B cell (primary cell): ENCODE measurements at regions of chr7 and their contacts with region 1.

Region 1: DNA sequence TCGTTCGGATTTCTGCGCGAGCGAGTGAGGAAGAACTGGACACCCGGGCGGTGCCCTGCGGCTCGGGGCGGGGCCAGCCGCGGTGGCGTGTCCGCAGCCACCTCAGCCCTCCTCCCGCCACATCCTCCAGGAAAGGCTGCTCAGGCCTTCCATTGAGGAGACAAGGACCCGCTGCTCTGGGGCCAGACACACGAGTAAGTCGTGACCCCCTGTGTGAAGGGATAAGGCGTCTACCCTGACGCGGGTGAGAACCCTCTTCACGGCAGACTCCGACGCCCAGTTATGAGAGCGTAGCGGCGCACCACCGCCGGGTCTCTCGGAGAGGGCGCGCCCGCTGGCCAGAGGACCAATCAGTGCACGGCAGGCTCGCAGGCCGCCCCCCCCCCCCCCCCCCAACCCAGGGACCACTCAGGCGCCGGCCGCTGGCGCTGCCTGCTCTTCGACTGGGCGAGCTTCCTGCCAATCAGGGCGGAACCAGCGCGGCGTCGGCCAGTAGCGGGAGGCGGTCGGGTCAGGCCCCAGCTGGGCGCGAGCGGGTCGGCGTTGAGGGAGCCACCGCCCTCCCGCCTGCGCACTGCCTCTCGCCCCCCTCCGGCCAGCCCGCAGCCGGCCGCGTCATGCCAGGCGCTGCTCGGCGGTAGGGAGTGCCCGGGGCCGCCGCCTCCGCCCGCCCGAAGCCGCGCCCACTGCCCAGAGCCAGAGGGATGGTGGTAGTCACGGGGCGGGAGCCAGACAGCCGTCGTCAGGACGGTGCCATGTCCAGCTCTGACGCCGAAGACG is at the start of gene KCTD7:
- DNase-seq: peak; percentile 97
- ATAC-seq: peak; percentile 85
- H3K4me3 ChIP-seq: peak within 1 kb of the TSS; percentile 82 to 97 (median 88)
- H3K4me3 Mint-ChIP-seq: peak within 1 kb of the TSS; percentile 96
- H3K27ac ChIP-seq: peak within 1 kb of the TSS; percentile 89 to 91
- H3K27ac Mint-ChIP-seq: peak within 1 kb of the TSS; percentile 95
- H3K4me1 ChIP-seq: peaks cover 42 to 48% of the 10 kb centered on the region in 2 donors
- H3K4me1 Mint-ChIP-seq: peaks cover 50% of the 10 kb centered on the region
- H3K27me3 ChIP-seq: no peaks in the 10 kb centered on the region
- H3K27me3 Mint-ChIP-seq: no peaks in the 10 kb centered on the region
- CTCF ChIP-seq: no peak
- total RNA-seq, gene KCTD7: 40.2 and 44.4 TPM in 2 replicates

Region 2: GRCh38 chr7:66557608-66558143 is 70.9 kb before region 1 on chr7:
- CTCF ChIA-PET with region 1: interaction called, 5 read pairs
- POLR2A ChIA-PET with region 1: interaction called, 3 read pairs
- intact Hi-C with region 1: loop called (anchors 1 kb)
- DNase-seq: peak; percentile 76
- ATAC-seq: peak; percentile 92
- H3K4me3 ChIP-seq: no peak overlapping the region
- H3K4me3 Mint-ChIP-seq: no peak overlapping the region
- H3K27ac ChIP-seq: no peak overlapping the region
- H3K27ac Mint-ChIP-seq: peak overlapping the region; percentile 37
- H3K4me1 ChIP-seq: peaks cover 0 to 6% of the 10 kb centered on the region in 2 donors
- H3K4me1 Mint-ChIP-seq: peaks cover 4% of the 10 kb centered on the region
- H3K27me3 ChIP-seq: no peaks in the 10 kb centered on the region
- H3K27me3 Mint-ChIP-seq: no peaks in the 10 kb centered on the region
- CTCF ChIP-seq: peak; percentile 92

Region 3: DNA sequence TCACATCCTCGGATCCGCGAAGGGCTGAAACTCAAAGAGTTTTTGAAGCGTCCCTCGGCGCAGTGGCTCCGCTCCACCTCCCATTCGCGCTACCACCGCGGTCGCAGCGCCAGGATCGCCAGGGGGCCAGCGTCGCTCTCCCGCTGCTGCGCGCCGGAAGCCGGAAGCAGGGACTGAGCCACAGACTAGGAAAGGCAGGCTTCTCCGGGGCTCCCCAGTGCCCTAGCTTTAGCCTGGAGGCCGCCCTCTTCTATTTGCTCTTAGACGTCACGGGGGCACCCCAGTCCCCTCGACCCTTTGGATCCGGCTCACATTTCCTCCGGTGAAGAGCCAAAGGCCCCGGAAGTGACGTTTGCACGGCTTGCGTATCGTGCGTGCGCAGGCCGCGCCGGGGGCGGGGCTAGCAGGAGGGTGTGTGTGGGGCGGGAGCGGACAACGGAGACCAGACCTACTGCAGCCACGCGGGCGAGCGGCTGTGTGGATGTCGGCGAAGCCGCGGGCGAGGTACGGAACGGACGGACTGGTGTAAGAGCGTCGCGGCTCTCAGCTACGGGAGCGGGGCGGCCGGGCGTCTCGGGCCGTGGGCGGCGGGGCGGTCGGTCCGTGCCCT is 25.7 kb after region 1 on chr7:
- CTCF ChIA-PET with region 1: no interaction called
- POLR2A ChIA-PET with region 1: interaction called, 4 read pairs
- intact Hi-C with region 1: loop called (anchors 1 kb)
- DNase-seq: peak; percentile 99
- ATAC-seq: peak; percentile 92
- H3K4me3 ChIP-seq: peak overlapping the region; percentile 54 to 86 (median 83)
- H3K4me3 Mint-ChIP-seq: peak overlapping the region; percentile 98
- H3K27ac ChIP-seq: peak overlapping the region; percentile 82 to 98
- H3K27ac Mint-ChIP-seq: peak overlapping the region; percentile 99
- H3K4me1 ChIP-seq: peaks cover 9 to 16% of the 10 kb centered on the region in 2 donors
- H3K4me1 Mint-ChIP-seq: peaks cover 24% of the 10 kb centered on the region
- H3K27me3 ChIP-seq: no peaks in the 10 kb centered on the region
- H3K27me3 Mint-ChIP-seq: no peaks in the 10 kb centered on the region
- CTCF ChIP-seq: no peak

Region 4: GRCh38 chr7:66740302-66740979 is 111.9 kb after region 1 on chr7 and contains the start of gene RABGEF1:
- CTCF ChIA-PET with region 1: no interaction called
- POLR2A ChIA-PET with region 1: interaction called, 11 read pairs
- intact Hi-C with region 1: loop called (anchors 2 kb)
- DNase-seq: peak; percentile 98
- ATAC-seq: peak; percentile 83
- H3K4me3 ChIP-seq: peak within 1 kb of the TSS; percentile 79 to 95 (median 93)
- H3K4me3 Mint-ChIP-seq: peak within 1 kb of the TSS; percentile 95
- H3K27ac ChIP-seq: peak within 1 kb of the TSS; percentile 89 to 97
- H3K27ac Mint-ChIP-seq: peak within 1 kb of the TSS; percentile 98
- H3K4me1 ChIP-seq: peaks cover 56 to 67% of the 10 kb centered on the region in 2 donors
- H3K4me1 Mint-ChIP-seq: peaks cover 61% of the 10 kb centered on the region
- H3K27me3 ChIP-seq: no peaks in the 10 kb centered on the region
- H3K27me3 Mint-ChIP-seq: no peaks in the 10 kb centered on the region
- CTCF ChIP-seq: no peak
- total RNA-seq, gene RABGEF1: 27.9 and 29.2 TPM in 2 replicates

Region 5: DNA sequence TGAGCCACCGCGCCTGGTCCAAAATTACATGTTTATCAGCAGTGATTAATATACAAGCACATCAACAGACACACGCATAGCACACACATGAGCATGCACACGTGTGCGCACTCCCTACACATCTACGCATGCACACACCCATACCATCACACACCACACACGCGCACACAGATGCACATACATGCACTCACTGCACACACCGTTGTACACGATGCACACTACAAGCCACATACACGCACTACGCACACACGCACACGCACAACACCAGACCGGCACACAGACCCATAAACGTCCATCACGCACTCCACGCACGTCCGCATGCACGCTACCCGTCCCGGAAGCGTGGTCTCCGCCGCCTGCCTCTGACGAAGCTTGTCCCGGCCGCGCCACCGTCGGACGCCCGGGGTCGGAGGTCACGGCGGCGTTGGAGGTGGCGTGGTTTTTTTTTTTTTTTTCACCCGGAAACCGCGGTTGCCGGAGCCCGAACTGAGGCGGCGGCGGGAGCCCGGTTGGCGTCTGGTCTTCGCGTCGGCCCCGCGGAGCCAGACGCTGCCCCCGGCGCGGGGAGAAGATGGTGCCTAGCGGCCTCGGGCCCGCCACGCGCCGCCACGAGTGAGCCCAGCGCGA is 292.3 kb after region 1 on chr7 and contains the start of gene TMEM248:
- CTCF ChIA-PET with region 1: no interaction called
- POLR2A ChIA-PET with region 1: no interaction called
- intact Hi-C with region 1: loop called (anchors 1 kb)
- DNase-seq: peak; percentile 94
- ATAC-seq: peak; percentile 93
- H3K4me3 ChIP-seq: peak within 1 kb of the TSS; percentile 63 to 98 (median 96)
- H3K4me3 Mint-ChIP-seq: peak within 1 kb of the TSS; percentile 100
- H3K27ac ChIP-seq: peak within 1 kb of the TSS; percentile 52 to 95
- H3K27ac Mint-ChIP-seq: peak within 1 kb of the TSS; percentile 100
- H3K4me1 ChIP-seq: peaks cover 20 to 32% of the 10 kb centered on the region in 2 donors
- H3K4me1 Mint-ChIP-seq: peaks cover 37% of the 10 kb centered on the region
- H3K27me3 ChIP-seq: no peaks in the 10 kb centered on the region
- H3K27me3 Mint-ChIP-seq: no peaks in the 10 kb centered on the region
- CTCF ChIP-seq: no peak
- total RNA-seq, gene TMEM248: 114 and 120 TPM in 2 replicates